ENCODE measurements at regions of chr5 and their contacts with region 1.

Region 1: GRCh38 chr5:135977375-135977928 is 22.7 kb upstream of the LECT2 start:
- DNase-seq: peak; percentile 62 to 95
- ATAC-seq: peak; percentile 97 to 99
- H3K4me3 ChIP-seq: no peak overlapping the region
- H3K27ac ChIP-seq: peak overlapping the region; percentile 85 to 86
- H3K4me1 ChIP-seq: peaks cover 64% of the 10 kb centered on the region
- CTCF ChIP-seq: peak; percentile 82
- EP300 ChIP-seq: peak; percentile 86 to 93; a peak in 4 of 5 replicates
- POLR2A ChIP-seq: no peak
- RAD21 ChIP-seq: peak; percentile 88 to 90

Region 2: GRCh38 chr5:135944967-135945560 is 32.4 kb before region 1 on chr5:
- CTCF ChIA-PET with region 1: interaction called, 12 read pairs
- POLR2A ChIA-PET with region 1: no interaction called
- DNase-seq: peak; percentile 44 to 89
- ATAC-seq: peak; percentile 74 to 89; a peak in 5 of 6 replicates
- H3K4me3 ChIP-seq: no peak overlapping the region
- H3K27ac ChIP-seq: peak overlapping the region; percentile 55 to 63
- H3K4me1 ChIP-seq: peaks cover 15% of the 10 kb centered on the region
- CTCF ChIP-seq: peak; percentile 93
- EP300 ChIP-seq: no peak
- POLR2A ChIP-seq: no peak
- RAD21 ChIP-seq: peak; percentile 94 to 96

Region 3: GRCh38 chr5:135993880-135994636 is 16.6 kb after region 1 on chr5:
- CTCF ChIA-PET with region 1: interaction called, 44 read pairs
- POLR2A ChIA-PET with region 1: no interaction called
- DNase-seq: peak in 1 of 2 experiments; percentile 78
- ATAC-seq: peak; percentile 85 to 87
- H3K4me3 ChIP-seq: peak overlapping the region; percentile 18
- H3K27ac ChIP-seq: peak overlapping the region; percentile 85 to 92
- H3K4me1 ChIP-seq: peaks cover 44% of the 10 kb centered on the region
- CTCF ChIP-seq: no peak
- EP300 ChIP-seq: peak; percentile 37 to 57; a peak in 2 of 5 replicates
- POLR2A ChIP-seq: no peak
- RAD21 ChIP-seq: 0 out of 5 replicates have a peak, but pooled peaks of 1 of the 2 experiments have one; percentile 6

Region 4: GRCh38 chr5:136014049-136015002 is 36.9 kb after region 1 on chr5:
- CTCF ChIA-PET with region 1: interaction called, 50 read pairs
- POLR2A ChIA-PET with region 1: interaction called, 4 read pairs
- DNase-seq: no peak
- ATAC-seq: no peak
- H3K4me3 ChIP-seq: no peak overlapping the region
- H3K27ac ChIP-seq: peak overlapping the region; percentile 96 to 97
- H3K4me1 ChIP-seq: peaks cover 83% of the 10 kb centered on the region
- CTCF ChIP-seq: no peak
- EP300 ChIP-seq: no peak
- POLR2A ChIP-seq: no peak
- RAD21 ChIP-seq: no peak

Region 5: DNA sequence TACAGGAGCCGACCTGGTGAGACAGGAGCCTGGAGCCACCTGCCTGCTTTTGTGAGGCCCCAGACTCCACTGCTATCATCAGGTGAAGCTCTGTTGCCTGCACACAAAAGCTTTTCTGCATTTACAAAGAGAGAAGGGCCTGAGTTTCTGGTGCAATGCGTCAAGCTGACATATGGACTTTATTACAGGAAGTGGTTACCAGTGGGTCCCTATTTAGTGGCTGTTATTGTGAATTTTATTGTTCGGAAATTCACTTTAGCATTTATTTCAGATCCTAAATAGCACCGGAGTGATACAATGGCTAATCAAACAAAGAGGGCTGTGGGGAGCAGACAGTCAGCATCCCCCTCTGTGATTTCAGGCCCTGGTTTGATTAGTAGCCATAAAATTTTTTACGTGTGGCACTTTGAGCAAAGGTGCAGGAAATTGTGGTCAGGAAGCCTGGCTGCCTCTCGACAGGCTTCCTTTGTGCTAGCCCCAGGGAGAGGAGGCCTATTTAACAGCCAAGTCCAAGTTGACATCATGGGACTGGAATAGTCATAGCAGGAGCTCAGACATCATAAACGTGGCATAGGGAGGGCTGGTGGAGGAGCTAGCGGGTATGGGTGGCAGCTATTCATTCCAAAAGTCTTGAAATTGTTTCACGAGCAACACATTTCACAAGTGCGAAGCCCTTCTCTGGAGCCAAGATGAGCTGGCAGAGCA is 59.7 kb after region 1 on chr5:
- CTCF ChIA-PET with region 1: interaction called, 30 read pairs
- POLR2A ChIA-PET with region 1: interaction called, 16 read pairs
- DNase-seq: no peak
- ATAC-seq: no peak
- H3K4me3 ChIP-seq: no peak overlapping the region
- H3K27ac ChIP-seq: peak overlapping the region; percentile 5 to 77; a peak in 4 of 6 replicates
- H3K4me1 ChIP-seq: peaks cover 99% of the 10 kb centered on the region
- CTCF ChIP-seq: no peak
- EP300 ChIP-seq: no peak
- POLR2A ChIP-seq: no peak
- RAD21 ChIP-seq: no peak

Region 6: DNA sequence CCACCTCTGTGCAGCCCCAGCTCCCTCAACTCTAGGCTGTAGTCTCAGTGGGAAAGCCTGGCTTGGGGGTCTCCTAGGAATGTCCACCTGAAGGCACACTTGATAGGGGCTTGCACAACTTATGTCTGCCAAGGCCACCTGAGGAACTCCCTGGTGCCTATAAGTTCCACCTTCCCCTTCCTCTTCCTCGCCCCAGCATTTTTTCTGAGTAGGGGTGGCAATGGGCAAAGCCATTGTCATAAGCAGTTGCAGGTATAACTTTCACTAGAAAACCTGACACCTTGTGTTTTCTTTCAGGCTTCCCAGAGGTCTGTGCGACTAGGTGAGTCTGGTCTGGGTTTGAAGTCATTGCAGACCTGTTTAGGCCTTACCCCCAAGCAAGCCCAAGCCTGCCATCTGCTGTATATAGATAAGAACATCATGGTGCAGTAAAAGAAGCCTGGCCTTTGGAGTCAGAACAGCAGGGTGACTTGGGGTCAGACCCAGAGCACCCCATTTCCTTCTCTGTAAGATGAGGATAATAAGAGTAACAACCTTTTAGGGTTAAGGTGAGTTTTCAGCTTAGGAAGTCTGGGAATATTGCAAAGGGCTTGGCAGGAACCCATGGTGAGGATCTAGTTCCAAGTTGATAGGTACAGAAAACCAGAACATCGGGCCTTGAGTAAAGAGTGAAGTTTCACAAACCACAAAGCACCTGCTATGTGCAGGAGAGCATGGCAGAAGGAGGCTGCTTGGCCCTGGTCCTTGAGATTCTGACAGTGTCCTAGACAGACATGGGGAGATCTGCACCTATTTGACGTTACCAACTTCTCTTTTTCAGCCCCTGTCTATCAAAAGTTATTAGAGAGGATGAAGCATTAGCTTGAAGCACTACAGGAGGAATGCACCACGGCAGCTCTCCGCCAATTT is 85.2 kb after region 1 on chr5:
- CTCF ChIA-PET with region 1: interaction called, 14 read pairs
- POLR2A ChIA-PET with region 1: interaction called, 5 read pairs
- DNase-seq: peak in 1 of 2 experiments; percentile 71
- ATAC-seq: no peak
- H3K4me3 ChIP-seq: no peak overlapping the region
- H3K27ac ChIP-seq: peak overlapping the region; percentile 86 to 93
- H3K4me1 ChIP-seq: peaks cover 97% of the 10 kb centered on the region
- CTCF ChIP-seq: peak; percentile 53
- EP300 ChIP-seq: no peak
- POLR2A ChIP-seq: no peak
- RAD21 ChIP-seq: peak; percentile 77 to 82

Region 7: GRCh38 chr5:136123236-136123768 is 145.8 kb after region 1 on chr5:
- CTCF ChIA-PET with region 1: no interaction called
- POLR2A ChIA-PET with region 1: no interaction called
- DNase-seq: peak; percentile 60 to 74
- ATAC-seq: peak; percentile 81 to 88
- H3K4me3 ChIP-seq: no peak overlapping the region
- H3K27ac ChIP-seq: peak overlapping the region in 1 of 2 experiments; percentile 44; a peak in 3 of 6 replicates
- H3K4me1 ChIP-seq: peaks cover 19% of the 10 kb centered on the region
- CTCF ChIP-seq: no peak
- EP300 ChIP-seq: no peak
- POLR2A ChIP-seq: no peak
- RAD21 ChIP-seq: no peak